ENCODE measurements at regions of chr6 and their contacts with region 1.

Region 1: GRCh38 chr6:122653094-122653493 is 42.9 kb downstream of the PKIB start:
- DNase-seq: peak; percentile 81
- ATAC-seq: peak; percentile 62
- H3K4me3 ChIP-seq: peak overlapping the region; percentile 59
- H3K27ac ChIP-seq: peak overlapping the region; percentile 99
- H3K4me1 ChIP-seq: peaks cover 69% of the 10 kb centered on the region
- H3K27me3 ChIP-seq: no peaks in the 10 kb centered on the region
- CTCF ChIP-seq: no peak

Region 2: GRCh38 chr6:122491919-122492555 is 161.1 kb before region 1 on chr6:
- CTCF ChIA-PET with region 1: no interaction called
- POLR2A ChIA-PET with region 1: no interaction called
- intact Hi-C with region 1: loop called (anchors 10 kb)
- DNase-seq: peak; percentile 80
- ATAC-seq: peak; percentile 98
- H3K4me3 ChIP-seq: no peak overlapping the region
- H3K27ac ChIP-seq: no peak overlapping the region
- H3K4me1 ChIP-seq: peaks cover 15% of the 10 kb centered on the region
- H3K27me3 ChIP-seq: no peaks in the 10 kb centered on the region
- CTCF ChIP-seq: peak; percentile 93

Region 3: DNA sequence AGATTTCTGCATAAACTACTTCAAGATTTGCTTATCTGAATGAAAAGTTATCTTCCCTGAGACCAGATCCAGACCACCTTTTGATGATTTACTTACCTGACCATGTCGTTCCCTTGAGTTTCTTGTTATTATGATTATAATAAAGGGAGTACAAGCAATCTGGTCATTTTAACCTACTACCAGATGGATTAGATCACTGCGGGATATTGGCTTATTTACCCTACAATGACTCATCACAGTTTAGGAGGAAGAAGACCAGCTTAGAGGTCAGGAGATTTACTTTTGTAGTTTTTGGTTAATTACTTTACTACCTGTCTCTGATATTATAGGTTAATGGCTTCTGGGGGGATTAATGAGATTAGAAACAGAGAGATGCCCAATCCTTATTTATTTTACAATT is 32.2 kb before region 1 on chr6:
- CTCF ChIA-PET with region 1: no interaction called
- POLR2A ChIA-PET with region 1: no interaction called
- intact Hi-C with region 1: loop called (anchors 2 kb)
- DNase-seq: peak; percentile 75
- ATAC-seq: peak; percentile 91
- H3K4me3 ChIP-seq: no peak overlapping the region
- H3K27ac ChIP-seq: peak overlapping the region; percentile 58
- H3K4me1 ChIP-seq: peaks cover 25% of the 10 kb centered on the region
- H3K27me3 ChIP-seq: no peaks in the 10 kb centered on the region
- CTCF ChIP-seq: no peak

Region 4: GRCh38 chr6:122631571-122632225 is 21.4 kb before region 1 on chr6:
- CTCF ChIA-PET with region 1: no interaction called
- POLR2A ChIA-PET with region 1: no interaction called
- intact Hi-C with region 1: loop called (anchors 1 kb)
- DNase-seq: no peak
- ATAC-seq: no peak
- H3K4me3 ChIP-seq: no peak overlapping the region
- H3K27ac ChIP-seq: no peak overlapping the region
- H3K4me1 ChIP-seq: no peaks in the 10 kb centered on the region
- H3K27me3 ChIP-seq: no peaks in the 10 kb centered on the region
- CTCF ChIP-seq: no peak

Measured in PC-3 (cell line).